Activated CD8-positive, alpha-beta T cell treated with anti-CD3 and anti-CD28 coated beads, Interleukin-2, amount 10 ng/mL, durations not matched to agents 7 days and 5 days (primary cell): ENCODE measurements at regions of chr6 and their contacts with region 1.

Region 1: DNA sequence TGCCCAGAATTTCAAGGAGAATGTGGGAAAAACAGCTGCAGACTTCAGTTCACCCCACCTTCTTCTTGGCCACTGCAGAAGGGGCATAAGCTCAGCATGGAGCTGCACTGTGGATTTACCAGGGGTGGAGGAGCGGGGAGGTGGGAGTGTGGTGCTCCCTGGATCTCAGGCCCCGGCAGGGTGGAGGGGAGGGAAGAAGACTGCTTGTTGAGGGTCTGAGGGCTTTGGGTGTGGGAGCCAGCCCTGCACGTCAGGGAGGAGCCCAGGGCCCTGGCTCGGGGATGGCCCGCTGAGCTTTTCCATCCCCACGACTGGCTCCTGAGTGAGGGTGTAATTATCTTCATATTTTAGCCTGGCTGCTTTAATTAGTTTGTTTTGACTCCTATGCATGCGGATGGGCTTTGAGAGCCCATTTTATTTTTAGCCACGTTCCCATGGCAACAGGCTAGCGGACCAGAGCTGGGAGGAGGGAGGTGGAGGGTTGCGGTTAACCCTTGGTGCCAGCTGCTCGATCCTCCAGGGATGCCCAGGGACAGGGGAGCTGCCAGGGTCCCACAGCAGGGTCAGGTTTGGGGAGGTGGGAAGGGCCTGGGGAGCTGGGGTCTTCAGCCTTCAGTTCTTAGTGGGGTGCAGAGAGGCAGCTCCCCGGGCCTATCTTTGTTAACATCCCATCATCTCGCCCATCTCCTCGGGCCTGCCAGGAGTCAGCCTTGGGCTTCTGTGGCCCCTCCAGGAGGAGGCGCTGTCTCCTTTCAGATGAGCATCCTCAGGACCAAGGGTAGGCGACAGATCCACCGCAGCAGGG is 68.2 kb downstream of the RAB44 start:
- DNase-seq: peak; percentile 90
- ATAC-seq: peak; percentile 90
- H3K4me3 Mint-ChIP-seq: no peak overlapping the region
- H3K27ac Mint-ChIP-seq: peak overlapping the region; percentile 14
- H3K4me1 Mint-ChIP-seq: peaks cover 49% of the 10 kb centered on the region
- H3K27me3 Mint-ChIP-seq: no peaks in the 10 kb centered on the region

Region 2: GRCh38 chr6:35977308-35977707 is 788.5 kb before region 1 on chr6:
- CTCF ChIA-PET with region 1: no interaction called
- POLR2A ChIA-PET with region 1: no interaction called
- DNase-seq: no peak
- ATAC-seq: no peak
- H3K4me3 Mint-ChIP-seq: no peak overlapping the region
- H3K27ac Mint-ChIP-seq: no peak overlapping the region
- H3K4me1 Mint-ChIP-seq: peaks cover 2% of the 10 kb centered on the region
- H3K27me3 Mint-ChIP-seq: peaks cover 6% of the 10 kb centered on the region

Region 3: DNA sequence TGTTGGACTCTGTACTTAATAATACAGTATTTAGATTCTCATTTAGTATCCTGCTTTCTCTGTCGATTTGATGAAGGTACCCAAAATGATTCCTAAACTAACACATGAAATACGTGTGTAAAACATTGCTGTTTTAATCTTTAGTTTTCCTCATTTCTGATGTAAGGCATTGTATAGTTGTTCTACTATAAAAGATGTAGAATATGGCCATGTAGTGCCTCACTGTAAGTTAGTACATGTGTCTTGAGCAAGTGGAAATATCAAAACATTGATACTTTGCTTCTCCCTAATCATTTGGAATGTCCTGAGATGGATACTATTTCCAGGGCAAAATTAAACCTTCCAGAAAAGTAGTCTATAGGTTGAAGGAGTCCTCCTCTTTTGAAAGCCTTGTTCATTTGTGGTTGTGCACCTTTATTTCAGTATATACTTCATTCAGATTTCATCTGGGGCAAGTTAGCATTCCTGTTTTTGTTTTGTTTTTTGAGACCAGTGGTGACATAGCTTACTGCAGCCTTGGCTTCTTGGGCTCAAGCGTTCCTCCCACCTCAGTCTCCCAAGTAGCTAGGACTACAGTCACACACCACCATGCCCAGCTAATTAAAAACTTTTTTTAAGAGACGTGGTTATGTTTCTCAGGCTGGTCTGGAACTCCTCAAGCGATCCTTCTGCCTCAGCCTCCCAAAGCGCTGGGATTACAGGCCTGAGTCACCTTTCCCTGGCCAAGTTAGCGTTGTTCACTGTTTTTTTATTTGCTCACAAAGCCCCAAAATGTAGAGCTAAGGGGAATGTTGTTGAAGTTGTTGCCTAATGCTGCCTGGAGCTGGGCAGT is 160.0 kb before region 1 on chr6:
- CTCF ChIA-PET with region 1: interaction called, 25 read pairs
- POLR2A ChIA-PET with region 1: no interaction called
- DNase-seq: no peak
- ATAC-seq: no peak
- H3K4me3 Mint-ChIP-seq: no peak overlapping the region
- H3K27ac Mint-ChIP-seq: peak overlapping the region; percentile 33
- H3K4me1 Mint-ChIP-seq: peaks cover 61% of the 10 kb centered on the region
- H3K27me3 Mint-ChIP-seq: no peaks in the 10 kb centered on the region

Region 4: DNA sequence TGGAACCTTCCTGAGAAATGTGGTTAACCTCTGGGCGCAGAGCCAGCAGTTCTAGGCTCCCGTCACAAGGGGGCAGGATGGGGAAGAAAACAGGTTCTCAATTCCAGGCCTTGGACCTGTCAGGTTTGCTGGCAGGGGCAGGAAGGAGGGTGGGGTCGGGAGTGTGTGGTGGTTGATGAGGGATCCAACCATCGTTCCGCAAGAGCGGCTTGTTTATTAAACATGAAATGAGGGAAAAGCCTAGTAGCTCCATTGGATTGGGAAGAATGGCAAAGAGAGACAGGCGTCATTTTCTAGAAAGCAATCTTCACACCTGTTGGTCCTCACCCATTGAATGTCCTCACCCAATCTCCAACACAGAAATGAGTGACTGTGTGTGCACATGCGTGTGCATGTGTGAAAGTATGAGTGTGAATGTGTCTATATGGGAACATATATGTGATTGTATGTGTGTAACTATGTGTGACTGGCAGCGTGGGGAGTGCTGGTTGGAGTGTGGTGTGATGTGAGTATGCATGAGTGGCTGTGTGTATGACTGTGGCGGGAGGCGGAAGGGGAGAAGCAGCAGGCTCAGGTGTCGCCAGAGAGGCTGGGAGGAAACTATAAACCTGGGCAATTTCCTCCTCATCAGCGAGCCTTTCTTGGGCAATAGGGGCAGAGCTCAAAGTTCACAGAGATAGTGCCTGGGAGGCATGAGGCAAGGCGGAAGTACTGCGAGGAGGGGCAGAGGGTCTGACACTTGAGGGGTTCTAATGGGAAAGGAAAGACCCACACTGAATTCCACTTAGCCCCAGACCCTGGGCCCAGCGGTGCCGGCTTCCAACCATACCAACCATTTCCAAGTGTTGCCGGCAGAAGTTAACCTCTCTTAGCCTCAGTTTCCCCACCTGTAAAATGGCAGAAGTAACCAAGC is 142.0 kb before region 1 on chr6:
- CTCF ChIA-PET with region 1: interaction called, 128 read pairs
- POLR2A ChIA-PET with region 1: no interaction called
- DNase-seq: peak; percentile 83
- ATAC-seq: peak; percentile 77
- H3K4me3 Mint-ChIP-seq: no peak overlapping the region
- H3K27ac Mint-ChIP-seq: peak overlapping the region; percentile 1
- H3K4me1 Mint-ChIP-seq: peaks cover 38% of the 10 kb centered on the region
- H3K27me3 Mint-ChIP-seq: no peaks in the 10 kb centered on the region

Region 5: GRCh38 chr6:36703982-36704381 is 61.8 kb before region 1 on chr6:
- CTCF ChIA-PET with region 1: no interaction called
- POLR2A ChIA-PET with region 1: no interaction called
- DNase-seq: no peak
- ATAC-seq: no peak
- H3K4me3 Mint-ChIP-seq: no peak overlapping the region
- H3K27ac Mint-ChIP-seq: no peak overlapping the region
- H3K4me1 Mint-ChIP-seq: peaks cover 9% of the 10 kb centered on the region
- H3K27me3 Mint-ChIP-seq: no peaks in the 10 kb centered on the region

Region 6: DNA sequence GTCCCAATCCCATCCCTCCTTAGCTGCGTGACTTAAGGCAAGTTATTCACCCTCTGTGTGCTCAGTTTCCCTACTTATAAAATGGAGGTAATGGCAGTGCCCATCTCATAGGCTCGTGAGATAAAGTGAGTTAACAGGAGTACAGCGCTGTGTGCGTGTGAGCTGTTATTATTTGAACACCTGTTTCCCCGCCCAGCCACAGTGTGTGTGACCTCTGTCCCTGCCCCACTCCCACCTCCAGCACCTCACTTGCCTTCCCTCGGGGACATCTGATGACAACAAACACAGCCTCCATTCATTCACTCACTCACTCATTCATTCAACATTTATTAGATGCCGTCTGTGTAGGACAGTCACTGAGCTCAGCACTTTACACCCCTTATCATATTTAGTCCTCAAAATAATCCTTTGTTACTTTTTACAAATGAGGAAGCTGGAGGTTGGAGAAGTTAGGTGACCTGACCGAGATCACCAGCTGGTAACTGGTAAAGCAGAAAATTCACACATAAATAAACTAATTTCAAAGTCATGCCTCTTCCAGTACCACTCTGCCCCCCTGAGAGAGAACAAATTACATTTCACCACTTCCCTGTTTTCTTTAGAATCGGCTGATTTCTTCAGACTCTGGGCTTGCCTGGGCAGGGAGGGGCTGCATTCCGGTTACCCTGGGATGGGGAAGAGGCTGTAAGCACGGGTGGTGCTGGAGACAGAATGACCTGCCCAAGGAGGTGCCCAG is 14.8 kb after region 1 on chr6:
- CTCF ChIA-PET with region 1: interaction called, 375 read pairs
- POLR2A ChIA-PET with region 1: interaction called, 3 read pairs
- DNase-seq: no peak
- ATAC-seq: no peak
- H3K4me3 Mint-ChIP-seq: no peak overlapping the region
- H3K27ac Mint-ChIP-seq: peak overlapping the region; percentile 57
- H3K4me1 Mint-ChIP-seq: peaks cover 38% of the 10 kb centered on the region
- H3K27me3 Mint-ChIP-seq: peaks cover 11% of the 10 kb centered on the region

Region 7: DNA sequence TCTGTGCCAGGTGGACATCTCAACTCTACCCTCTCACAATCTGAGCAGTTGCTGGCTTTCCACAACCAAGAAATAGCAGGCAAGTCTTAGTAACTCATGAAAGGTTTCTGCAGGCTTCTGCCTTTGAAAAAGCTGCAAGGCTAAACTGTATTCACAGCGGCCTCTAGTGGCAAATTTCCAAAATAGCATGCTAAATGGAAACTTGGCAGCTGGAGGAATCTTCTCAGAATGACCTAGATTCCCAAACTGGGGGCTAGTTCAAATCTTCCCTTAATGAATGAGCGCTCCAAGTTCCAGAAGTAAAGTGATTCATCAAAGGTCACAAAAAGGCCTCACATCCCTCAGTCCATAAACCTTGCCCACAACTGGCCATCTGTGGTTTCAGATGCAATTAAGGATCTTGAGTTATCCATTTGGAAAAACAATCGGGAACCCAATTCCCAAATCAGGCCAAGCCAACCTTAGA is 85.4 kb after region 1 on chr6:
- CTCF ChIA-PET with region 1: interaction called, 129 read pairs
- POLR2A ChIA-PET with region 1: interaction called, 4 read pairs
- DNase-seq: peak; percentile 68
- ATAC-seq: no peak
- H3K4me3 Mint-ChIP-seq: no peak overlapping the region
- H3K27ac Mint-ChIP-seq: no peak overlapping the region
- H3K4me1 Mint-ChIP-seq: peaks cover 5% of the 10 kb centered on the region
- H3K27me3 Mint-ChIP-seq: no peaks in the 10 kb centered on the region

Region 8: GRCh38 chr6:37207903-37208456 is 442.2 kb after region 1 on chr6:
- CTCF ChIA-PET with region 1: interaction called, 19 read pairs
- POLR2A ChIA-PET with region 1: no interaction called
- DNase-seq: peak; percentile 94
- ATAC-seq: peak; percentile 70
- H3K4me3 Mint-ChIP-seq: peak overlapping the region; percentile 45
- H3K27ac Mint-ChIP-seq: peak overlapping the region; percentile 87
- H3K4me1 Mint-ChIP-seq: peaks cover 79% of the 10 kb centered on the region
- H3K27me3 Mint-ChIP-seq: no peaks in the 10 kb centered on the region

Region 9: DNA sequence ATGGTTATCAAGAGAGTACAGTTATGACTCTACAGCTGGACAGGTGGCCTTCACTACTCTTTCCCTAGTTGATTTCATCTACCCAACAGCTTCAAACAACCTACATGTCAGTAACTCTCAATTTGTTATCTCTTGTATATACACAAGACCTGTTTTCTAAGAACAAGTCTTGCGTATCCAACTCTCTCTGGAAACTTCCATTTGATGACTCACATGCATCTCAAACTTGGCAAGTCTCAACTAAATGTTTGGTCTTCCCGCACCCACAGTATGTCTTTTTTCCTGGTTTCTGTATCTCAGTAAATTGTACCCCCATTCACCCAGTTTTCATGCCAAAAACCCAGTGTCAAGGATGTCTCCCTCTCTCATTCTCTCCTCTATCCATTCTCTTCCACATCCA is 1776.2 kb after region 1 on chr6:
- CTCF ChIA-PET with region 1: no interaction called
- POLR2A ChIA-PET with region 1: no interaction called
- DNase-seq: no peak
- ATAC-seq: no peak
- H3K4me3 Mint-ChIP-seq: no peak overlapping the region
- H3K27ac Mint-ChIP-seq: no peak overlapping the region
- H3K4me1 Mint-ChIP-seq: no peaks in the 10 kb centered on the region
- H3K27me3 Mint-ChIP-seq: no peaks in the 10 kb centered on the region